ENCODE measurements at regions of chr2 and their contacts with region 1.

Region 1: GRCh38 chr2:177296040-177296439 is 31.5 kb upstream of the NFE2L2 start:
- DNase-seq: no peak
- ATAC-seq: peak; percentile 24
- H3K4me3 Mint-ChIP-seq: no peak overlapping the region
- H3K27ac Mint-ChIP-seq: no peak overlapping the region
- H3K4me1 Mint-ChIP-seq: peaks cover 23% of the 10 kb centered on the region
- H3K27me3 Mint-ChIP-seq: no peaks in the 10 kb centered on the region

Region 2: GRCh38 chr2:176297067-176297466 is 999.0 kb before region 1 on chr2:
- CTCF ChIA-PET with region 1: no interaction called
- POLR2A ChIA-PET with region 1: no interaction called
- intact Hi-C with region 1: no loop called
- DNase-seq: no peak
- ATAC-seq: no peak
- H3K4me3 Mint-ChIP-seq: no peak overlapping the region
- H3K27ac Mint-ChIP-seq: no peak overlapping the region
- H3K4me1 Mint-ChIP-seq: peaks cover 4% of the 10 kb centered on the region
- H3K27me3 Mint-ChIP-seq: no peaks in the 10 kb centered on the region

Region 3: DNA sequence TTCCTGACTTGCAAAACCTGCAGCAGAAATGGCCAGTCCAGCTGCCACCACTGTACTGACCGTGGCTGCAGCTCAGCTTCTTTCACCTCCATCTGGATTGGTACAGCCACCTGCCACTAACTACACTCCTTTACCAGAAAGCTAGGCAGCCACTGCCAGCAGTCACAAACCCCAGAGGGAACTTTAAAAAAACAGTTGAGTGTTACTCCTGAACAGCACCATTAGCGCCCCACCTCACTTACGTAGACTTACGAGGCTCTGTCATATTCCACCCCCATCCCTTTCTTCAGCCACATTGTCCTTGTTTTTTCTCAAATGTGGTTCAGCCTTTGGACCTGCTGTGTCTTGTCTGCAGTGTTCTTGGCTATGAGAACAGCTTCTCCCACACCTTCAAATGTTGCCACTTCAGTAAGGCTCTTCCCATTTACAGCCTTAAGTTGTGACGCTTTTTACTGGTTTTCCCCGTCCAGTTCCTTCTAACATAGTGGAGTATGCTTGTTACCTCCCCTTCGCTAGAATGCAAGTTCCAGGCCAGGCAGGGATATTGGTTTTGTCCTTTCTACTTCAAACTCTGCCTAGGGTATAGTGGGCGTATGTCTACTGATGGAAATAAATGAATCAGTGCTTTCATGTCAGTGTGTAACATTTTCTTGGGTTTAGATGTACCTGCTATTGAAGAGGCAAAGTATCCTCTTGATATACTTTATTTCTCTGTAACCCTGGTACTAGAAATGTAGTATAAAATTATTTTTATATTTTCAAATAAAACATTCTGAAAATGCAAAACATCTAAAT is 66.4 kb before region 1 on chr2:
- CTCF ChIA-PET with region 1: no interaction called
- POLR2A ChIA-PET with region 1: no interaction called
- intact Hi-C with region 1: loop called in 1 of 2 experiments (anchors 5 kb)
- DNase-seq: no peak
- ATAC-seq: peak; percentile 54
- H3K4me3 Mint-ChIP-seq: no peak overlapping the region
- H3K27ac Mint-ChIP-seq: peak overlapping the region; percentile 79
- H3K4me1 Mint-ChIP-seq: peaks cover 44% of the 10 kb centered on the region
- H3K27me3 Mint-ChIP-seq: no peaks in the 10 kb centered on the region

Region 4: DNA sequence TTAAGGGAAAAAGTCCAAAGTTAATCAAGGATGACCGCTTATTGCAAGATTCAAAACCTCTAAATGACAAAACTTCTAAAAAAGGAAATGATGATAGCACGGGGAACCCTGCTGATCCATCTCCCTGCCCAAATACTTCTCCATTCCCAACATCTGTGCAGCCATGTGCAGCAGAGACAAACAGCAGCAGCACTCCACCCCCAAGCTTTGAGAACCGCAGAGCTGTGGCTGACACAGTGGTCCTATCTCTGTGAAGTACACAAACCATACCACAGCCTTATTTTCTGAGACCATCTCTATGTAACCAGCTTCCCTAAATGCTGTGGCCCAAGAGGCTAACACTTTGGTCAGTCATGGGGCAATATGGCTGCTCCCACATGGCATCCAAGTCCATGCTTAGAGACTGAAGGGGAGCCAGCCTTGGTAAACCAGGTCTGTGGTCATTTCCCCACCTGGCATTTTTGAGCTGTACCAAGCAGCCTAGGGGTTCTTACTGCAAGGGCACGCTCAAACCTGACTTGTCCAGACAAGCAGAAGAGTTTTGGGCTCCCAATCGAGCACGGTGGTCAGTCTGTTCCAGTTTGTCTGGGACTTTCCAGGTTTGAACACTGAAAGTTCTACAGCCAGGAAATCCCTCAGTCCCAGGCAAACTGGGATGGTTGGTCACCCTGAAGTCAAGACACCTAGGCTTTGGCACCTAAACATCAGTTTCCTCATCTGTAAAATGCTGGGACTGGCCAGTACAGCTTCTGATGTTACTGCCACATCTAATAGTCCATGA is 14.4 kb before region 1 on chr2:
- CTCF ChIA-PET with region 1: interaction called, 22 read pairs
- POLR2A ChIA-PET with region 1: no interaction called
- intact Hi-C with region 1: no loop called
- DNase-seq: no peak
- ATAC-seq: no peak
- H3K4me3 Mint-ChIP-seq: no peak overlapping the region
- H3K27ac Mint-ChIP-seq: no peak overlapping the region
- H3K4me1 Mint-ChIP-seq: peaks cover 9% of the 10 kb centered on the region
- H3K27me3 Mint-ChIP-seq: no peaks in the 10 kb centered on the region

Measured in activated CD4-positive, alpha-beta T cell treated with anti-CD3 and anti-CD28 coated beads for 36 hours (primary cell).